ENCODE measurements at regions of chr22 and their contacts with region 1.

Region 1: DNA sequence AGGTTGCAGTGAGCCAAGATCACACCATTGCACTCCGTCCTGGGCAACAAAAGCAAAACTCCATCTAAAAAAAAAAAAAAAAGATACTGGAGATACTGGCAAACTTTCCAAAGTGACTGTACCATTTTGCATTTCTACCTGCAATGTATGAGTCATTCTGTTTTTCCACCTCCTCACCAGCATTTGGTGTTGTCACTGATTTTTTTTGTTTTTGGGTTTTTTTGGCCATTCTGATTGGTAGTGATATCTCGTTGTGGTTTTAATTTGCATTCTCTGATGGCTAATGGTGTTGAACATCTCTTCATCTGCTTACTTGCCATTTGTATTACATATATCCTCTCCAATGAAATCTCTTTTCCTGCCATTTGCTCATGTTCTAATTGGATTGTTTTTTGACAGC is 12.0 kb upstream of the RBX1 start:
- DNase-seq: no peak
- H3K4me3 ChIP-seq: no peak overlapping the region
- H3K27ac ChIP-seq: no peak overlapping the region
- H3K4me1 ChIP-seq: peaks cover 30% of the 10 kb centered on the region
- CTCF ChIP-seq: no peak

Region 2: GRCh38 chr22:40709752-40710413 is 229.3 kb before region 1 on chr22:
- CTCF ChIA-PET with region 1: no interaction called
- POLR2A ChIA-PET with region 1: interaction called, 13 read pairs
- intact Hi-C with region 1: no loop called
- DNase-seq: no peak
- H3K4me3 ChIP-seq: no peak overlapping the region
- H3K27ac ChIP-seq: no peak overlapping the region
- H3K4me1 ChIP-seq: no peaks in the 10 kb centered on the region
- CTCF ChIP-seq: no peak

Measured in OCI-LY7 (cell line).